PC-9 (cell line): ENCODE measurements at regions of chr1 and their contacts with region 1.

Region 1: DNA sequence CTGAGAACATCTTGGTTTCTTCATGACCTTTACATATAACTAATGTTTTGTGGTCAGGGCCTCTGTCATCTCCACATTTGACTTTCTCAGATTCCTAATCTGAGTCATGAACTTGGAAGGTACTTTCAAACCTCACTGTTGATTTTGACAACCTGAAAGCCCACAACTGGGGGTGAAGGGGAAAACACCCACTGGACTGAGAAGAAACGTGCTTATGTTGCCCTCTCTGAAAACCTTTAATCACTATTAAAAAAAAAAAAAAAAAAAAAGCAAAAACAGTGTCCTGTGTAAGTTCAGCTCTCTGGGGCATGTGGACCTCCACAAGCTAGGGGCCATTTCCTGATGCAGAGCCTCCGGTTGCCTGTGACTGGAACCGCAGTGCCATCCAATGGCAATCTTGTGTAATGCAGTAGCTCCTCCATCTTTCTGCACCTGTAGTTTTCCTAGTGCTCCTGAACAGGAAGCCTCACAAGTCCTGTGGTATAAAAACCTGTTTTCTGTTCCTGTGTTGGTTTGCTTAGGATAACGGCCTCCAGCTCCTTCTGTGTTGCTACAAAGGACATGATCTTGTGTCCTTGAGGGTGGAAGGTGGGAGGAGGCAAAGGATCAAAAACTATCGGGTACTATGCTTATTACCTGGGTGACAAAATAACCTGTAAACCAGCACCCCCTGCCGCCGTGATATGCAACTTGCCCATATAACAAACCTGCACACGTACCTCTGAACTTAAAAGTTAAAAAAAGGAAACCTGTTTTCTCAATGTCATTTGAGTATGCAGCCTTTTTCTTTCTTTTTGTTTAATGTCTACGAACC is 124.5 kb downstream of the ZNF648 start:
- DNase-seq: peak; percentile 30 to 48
- H3K4me3 ChIP-seq: no peak overlapping the region
- H3K27ac ChIP-seq: no peak overlapping the region
- H3K4me1 ChIP-seq: no peaks in the 10 kb centered on the region
- H3K27me3 ChIP-seq: no peaks in the 10 kb centered on the region; the same call in 1 of the 2 replicates
- CTCF ChIP-seq: peak; percentile 64

Region 2: GRCh38 chr1:181479137-181479745 is 457.7 kb before region 1 on chr1:
- CTCF ChIA-PET with region 1: no interaction called
- POLR2A ChIA-PET with region 1: interaction called, 4 read pairs
- intact Hi-C with region 1: loop called (anchors 1 kb)
- DNase-seq: peak in 1 of 2 experiments; percentile 24
- H3K4me3 ChIP-seq: no peak overlapping the region
- H3K27ac ChIP-seq: no peak overlapping the region
- H3K4me1 ChIP-seq: no peaks in the 10 kb centered on the region
- H3K27me3 ChIP-seq: peaks cover 38% of the 10 kb centered on the region
- CTCF ChIP-seq: peak; percentile 71